HEK293 (cell line): ENCODE measurements at regions of chr18 and their contacts with region 1.

Region 1: GRCh38 chr18:63339920-63340484 is 20.4 kb upstream of the BCL2 start:
- H3K4me3 ChIP-seq: no peak overlapping the region
- H3K27ac ChIP-seq: no peak overlapping the region
- H3K4me1 ChIP-seq: no peaks in the 10 kb centered on the region
- CTCF ChIP-seq: 0 out of 2 replicates have a peak, but pooled peaks have one; percentile 14

Region 2: GRCh38 chr18:63329431-63330145 is 10.4 kb before region 1 on chr18:
- CTCF ChIA-PET with region 1: interaction called, 19 read pairs
- POLR2A ChIA-PET with region 1: no interaction called
- H3K4me3 ChIP-seq: no peak overlapping the region
- H3K27ac ChIP-seq: no peak overlapping the region
- H3K4me1 ChIP-seq: no peaks in the 10 kb centered on the region
- CTCF ChIP-seq: no peak

Region 3: GRCh38 chr18:63356272-63356896 is 16.4 kb after region 1 on chr18:
- CTCF ChIA-PET with region 1: interaction called, 23 read pairs
- POLR2A ChIA-PET with region 1: no interaction called
- H3K4me3 ChIP-seq: no peak overlapping the region
- H3K27ac ChIP-seq: no peak overlapping the region
- H3K4me1 ChIP-seq: no peaks in the 10 kb centered on the region
- CTCF ChIP-seq: no peak